Pancreas (tissue), 10 donors: ENCODE measurements at regions of chr7 and their contacts with region 1.

Region 1: DNA sequence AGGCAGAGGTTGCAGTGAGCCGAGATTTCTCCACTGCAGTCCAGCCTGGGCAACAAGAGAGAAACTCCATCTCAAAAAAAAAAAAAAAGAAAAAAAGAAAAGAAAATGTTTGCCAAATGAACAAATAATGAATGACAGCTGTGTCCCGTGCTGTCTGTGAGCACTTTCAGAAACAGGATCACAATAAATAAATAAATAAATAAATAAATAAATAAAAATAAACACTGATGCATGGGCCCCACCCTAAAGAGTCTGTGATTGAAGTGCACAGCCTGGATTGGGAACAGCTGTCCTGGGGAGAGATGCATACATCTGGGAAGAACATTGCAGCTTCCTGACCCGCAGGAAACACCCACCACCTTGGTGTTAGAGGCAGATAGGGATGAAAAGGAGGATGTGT is 123.6 kb downstream of the NPTX2 start:
- DNase-seq: no peak
- ATAC-seq: no peak
- H3K4me3 ChIP-seq: no peak overlapping the region
- H3K27ac ChIP-seq: no peak overlapping the region
- H3K4me1 ChIP-seq: no peaks in the 10 kb centered on the region
- H3K27me3 ChIP-seq: no peaks in the 10 kb centered on the region
- CTCF ChIP-seq: no peak

Region 2: GRCh38 chr7:98439484-98439883 is 301.2 kb before region 1 on chr7:
- intact Hi-C with region 1: loop called (anchors 5 to 10 kb)
- DNase-seq: no peak
- ATAC-seq: no peak
- H3K4me3 ChIP-seq: no peak overlapping the region
- H3K27ac ChIP-seq: no peak overlapping the region
- H3K4me1 ChIP-seq: no peaks in the 10 kb centered on the region
- H3K27me3 ChIP-seq: no peaks in the 10 kb centered on the region
- CTCF ChIP-seq: no peak